ENCODE measurements at regions of chr1 and their contacts with region 1.

Region 1: GRCh38 chr1:96966536-96967138 is 245.1 kb downstream of the PTBP2 start:
- DNase-seq: peak; percentile 86
- ATAC-seq: peak; percentile 88
- H3K4me3 ChIP-seq: peak overlapping the region; percentile 68
- H3K27ac ChIP-seq: no peak overlapping the region
- H3K4me1 ChIP-seq: peaks cover 14% of the 10 kb centered on the region
- H3K27me3 ChIP-seq: no peaks in the 10 kb centered on the region
- CTCF ChIP-seq: peak; percentile 83

Region 2: DNA sequence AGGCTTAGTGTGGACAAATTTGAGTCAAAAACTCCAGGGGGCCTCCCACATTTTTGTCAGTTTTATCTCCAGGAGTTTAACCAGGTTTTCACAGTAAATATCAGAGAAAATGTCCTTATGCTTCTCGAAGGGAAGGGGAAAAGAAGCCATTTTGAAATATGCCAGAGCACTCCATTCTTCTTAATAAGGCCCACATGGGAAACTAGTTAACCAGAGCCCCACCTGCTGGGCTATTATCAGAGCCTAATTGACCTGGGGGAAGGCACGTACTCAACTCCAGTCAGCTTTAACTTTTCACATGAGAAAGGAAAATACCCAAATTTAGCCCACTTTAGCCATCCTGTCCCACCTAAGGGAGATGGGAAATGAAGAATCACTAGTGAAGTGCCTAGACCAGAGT is 51.3 kb after region 1 on chr1:
- CTCF ChIA-PET with region 1: no interaction called
- POLR2A ChIA-PET with region 1: no interaction called
- intact Hi-C with region 1: loop called (anchors 1 kb)
- DNase-seq: peak; percentile 60
- ATAC-seq: peak; percentile 76
- H3K4me3 ChIP-seq: no peak overlapping the region; the same call in 1 of the 2 replicates
- H3K27ac ChIP-seq: no peak overlapping the region
- H3K4me1 ChIP-seq: peaks cover 6% of the 10 kb centered on the region; the same call in 1 of the 2 replicates
- H3K27me3 ChIP-seq: no peaks in the 10 kb centered on the region
- CTCF ChIP-seq: peak; percentile 58

Region 3: DNA sequence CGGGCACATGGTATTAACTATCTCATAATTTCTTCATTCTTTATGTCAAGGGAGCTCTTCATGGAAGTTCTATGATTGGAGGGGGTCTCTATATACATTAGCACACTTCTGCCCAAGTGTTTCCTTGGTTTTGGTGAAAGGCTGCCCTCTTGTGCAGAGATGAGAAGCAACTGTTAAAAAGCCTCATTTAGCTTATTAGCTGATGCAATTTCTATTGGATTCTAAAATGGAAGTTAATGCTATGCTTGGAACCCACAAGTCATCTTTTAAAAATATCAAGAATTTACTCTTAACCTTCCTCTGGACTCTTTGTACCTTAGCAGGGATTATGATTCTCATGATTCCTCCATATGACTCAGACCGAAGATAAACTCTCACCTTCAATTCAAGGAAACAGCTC is 83.9 kb after region 1 on chr1:
- CTCF ChIA-PET with region 1: interaction called, 3 read pairs
- POLR2A ChIA-PET with region 1: no interaction called
- intact Hi-C with region 1: loop called (anchors 1 kb)
- DNase-seq: peak; percentile 51
- ATAC-seq: peak; percentile 52; the same call in 1 of the 2 replicates
- H3K4me3 ChIP-seq: no peak overlapping the region
- H3K27ac ChIP-seq: no peak overlapping the region
- H3K4me1 ChIP-seq: no peaks in the 10 kb centered on the region
- H3K27me3 ChIP-seq: no peaks in the 10 kb centered on the region
- CTCF ChIP-seq: peak; percentile 66

Region 4: DNA sequence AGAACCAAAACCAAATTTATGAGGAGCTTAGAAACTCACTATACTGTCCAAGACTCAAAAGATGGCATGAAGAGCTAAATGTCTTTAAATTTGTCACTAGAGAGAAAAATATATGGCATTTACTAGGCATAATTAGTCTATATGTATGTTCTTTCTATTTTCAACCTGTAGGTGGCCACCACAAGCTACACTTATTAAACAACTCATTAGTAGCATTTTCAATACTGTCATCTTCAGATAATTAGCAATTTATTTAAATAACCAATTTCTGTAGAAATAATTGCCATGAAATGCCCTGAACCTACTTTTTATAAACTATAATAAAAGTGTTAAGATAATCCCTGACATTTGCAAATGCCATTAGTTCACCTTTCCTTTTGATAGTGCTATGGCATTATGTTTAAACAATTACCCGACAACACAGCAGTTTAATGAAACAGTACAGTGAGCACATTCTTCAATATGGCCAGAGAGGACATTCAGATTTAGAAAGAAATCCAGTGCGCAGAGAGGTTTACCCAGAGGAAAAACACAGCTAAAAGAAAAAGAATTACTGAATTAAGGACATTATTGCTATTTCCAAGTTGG is 277.4 kb after region 1 on chr1:
- CTCF ChIA-PET with region 1: no interaction called
- POLR2A ChIA-PET with region 1: no interaction called
- intact Hi-C with region 1: loop called (anchors 10 kb)
- DNase-seq: peak; percentile 49
- ATAC-seq: no peak
- H3K4me3 ChIP-seq: no peak overlapping the region
- H3K27ac ChIP-seq: no peak overlapping the region
- H3K4me1 ChIP-seq: no peaks in the 10 kb centered on the region
- H3K27me3 ChIP-seq: no peaks in the 10 kb centered on the region
- CTCF ChIP-seq: peak; percentile 79

Region 5: GRCh38 chr1:97529600-97529999 is 563.0 kb after region 1 on chr1:
- CTCF ChIA-PET with region 1: no interaction called
- POLR2A ChIA-PET with region 1: no interaction called
- intact Hi-C with region 1: loop called (anchors 5 kb)
- DNase-seq: no peak
- ATAC-seq: no peak
- H3K4me3 ChIP-seq: no peak overlapping the region
- H3K27ac ChIP-seq: no peak overlapping the region
- H3K4me1 ChIP-seq: no peaks in the 10 kb centered on the region
- H3K27me3 ChIP-seq: no peaks in the 10 kb centered on the region
- CTCF ChIP-seq: no peak

Region 6: GRCh38 chr1:97540346-97540888 is 573.8 kb after region 1 on chr1:
- CTCF ChIA-PET with region 1: no interaction called
- POLR2A ChIA-PET with region 1: no interaction called
- intact Hi-C with region 1: no loop called
- DNase-seq: no peak
- ATAC-seq: no peak
- H3K4me3 ChIP-seq: no peak overlapping the region
- H3K27ac ChIP-seq: no peak overlapping the region
- H3K4me1 ChIP-seq: no peaks in the 10 kb centered on the region
- H3K27me3 ChIP-seq: no peaks in the 10 kb centered on the region
- CTCF ChIP-seq: no peak

Region 7: DNA sequence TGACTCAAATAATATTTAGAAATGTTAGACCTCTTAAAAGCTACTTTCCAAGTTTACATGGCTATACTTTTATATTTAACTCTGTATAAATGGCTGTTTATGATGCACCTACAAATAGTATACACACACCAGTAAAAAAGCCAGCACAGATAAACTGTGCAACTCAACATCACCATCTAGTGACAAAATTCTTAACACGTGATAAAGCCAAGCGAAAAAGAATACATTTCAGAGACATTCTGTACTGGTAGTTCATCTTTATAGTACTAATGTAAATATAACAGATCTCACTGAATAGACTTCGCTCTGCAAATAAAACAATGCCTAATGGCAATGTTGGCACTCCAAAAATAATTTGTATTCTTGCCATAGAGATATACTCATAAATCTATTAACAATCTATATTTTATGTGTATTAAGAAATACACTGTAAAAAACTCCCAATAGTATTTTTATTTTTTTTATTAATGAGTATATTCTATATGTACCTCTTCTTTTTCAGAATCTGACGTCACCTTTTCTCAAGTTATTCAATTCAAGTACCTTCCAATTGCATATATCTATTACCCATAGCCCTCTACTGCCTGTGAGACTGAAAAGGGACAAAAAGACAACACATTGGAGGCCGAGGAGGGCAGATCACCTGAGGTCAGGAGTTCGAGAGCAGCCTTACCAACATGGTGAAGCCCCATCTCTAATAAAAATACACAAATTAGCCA is 854.0 kb after region 1 on chr1:
- CTCF ChIA-PET with region 1: no interaction called
- POLR2A ChIA-PET with region 1: no interaction called
- intact Hi-C with region 1: loop called (anchors 5 kb)
- DNase-seq: peak; percentile 76
- ATAC-seq: peak; percentile 72
- H3K4me3 ChIP-seq: no peak overlapping the region
- H3K27ac ChIP-seq: no peak overlapping the region
- H3K4me1 ChIP-seq: no peaks in the 10 kb centered on the region
- H3K27me3 ChIP-seq: no peaks in the 10 kb centered on the region
- CTCF ChIP-seq: peak; percentile 82

Measured in PC-3 (cell line).